Heart right ventricle (tissue), 16 donors: ENCODE measurements at regions of chr3 and their contacts with region 1.

Region 1: DNA sequence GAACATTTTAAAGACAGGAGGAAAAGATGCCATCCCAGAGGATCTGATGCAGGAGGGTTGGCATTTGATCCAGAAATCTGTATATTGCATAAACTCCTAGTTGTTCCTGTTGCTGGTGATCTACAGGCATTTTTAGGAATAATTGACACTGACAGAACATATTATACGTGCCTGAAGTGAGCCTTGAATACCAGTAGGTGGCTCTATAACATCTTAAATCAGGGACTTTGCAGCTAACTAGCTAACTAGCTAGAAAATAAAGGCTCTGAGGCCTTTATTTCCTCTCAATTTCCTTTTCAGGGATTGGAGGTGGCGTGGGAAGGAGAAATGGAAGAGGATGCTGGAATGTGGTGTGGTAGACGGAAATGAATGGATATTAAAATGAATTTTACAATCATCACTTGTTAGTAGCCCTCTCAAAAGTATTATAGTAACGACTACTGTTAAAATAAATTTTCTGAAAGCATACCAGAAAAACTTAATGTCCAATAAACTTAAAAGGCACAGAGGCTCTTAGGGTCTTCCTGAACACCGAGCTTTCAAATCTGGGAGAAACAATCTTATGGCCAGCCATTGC is 73.9 kb upstream of the ZBED2 start:
- DNase-seq: no peak
- ATAC-seq: peak; percentile 53 to 90 (median 86)
- H3K4me3 ChIP-seq: no peak overlapping the region
- H3K27ac ChIP-seq: peak overlapping the region in 4 of 10 donors; percentile 3 to 20 (median 8)
- H3K4me1 ChIP-seq: peaks cover 0 to 30% (median 3%) of the 10 kb centered on the region in 9 donors
- H3K27me3 ChIP-seq: no peaks in the 10 kb centered on the region
- CTCF ChIP-seq: peak; percentile 51 to 87 (median 75)

Region 2: DNA sequence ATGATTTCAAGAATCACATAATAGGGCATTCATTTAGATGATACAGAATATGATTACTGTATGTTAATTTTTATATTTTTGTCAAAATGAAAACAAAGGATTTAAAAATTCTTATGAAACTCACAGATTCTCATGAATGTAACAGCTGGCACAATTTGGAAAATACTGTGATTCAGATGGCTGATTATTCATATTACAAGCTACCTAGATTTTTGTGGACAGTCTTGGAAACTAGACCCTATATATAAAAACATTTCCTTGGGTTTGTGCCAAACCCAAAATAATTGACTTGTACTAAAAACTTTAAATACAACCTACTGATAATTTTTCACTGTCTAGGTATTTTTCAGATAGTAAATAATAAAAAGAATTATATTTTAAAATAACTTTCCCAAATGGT is 100.1 kb before region 1 on chr3:
- intact Hi-C with region 1: no loop called
- DNase-seq: no peak
- ATAC-seq: no peak
- H3K4me3 ChIP-seq: no peak overlapping the region
- H3K27ac ChIP-seq: no peak overlapping the region
- H3K4me1 ChIP-seq: no peaks in the 10 kb centered on the region
- H3K27me3 ChIP-seq: peaks cover 0 to 9% (median 5%) of the 10 kb centered on the region in 7 donors
- CTCF ChIP-seq: no peak

Region 3: GRCh38 chr3:111717601-111718000 is 48.6 kb after region 1 on chr3:
- intact Hi-C with region 1: loop called in 6 of 10 experiments (anchors 1 to 5 kb)
- DNase-seq: peak; percentile 51 to 77
- ATAC-seq: peak; percentile 82 to 93 (median 90)
- H3K4me3 ChIP-seq: no peak overlapping the region
- H3K27ac ChIP-seq: peak overlapping the region in 6 of 10 donors; percentile 12 to 38 (median 23)
- H3K4me1 ChIP-seq: peaks cover 0 to 41% (median 19%) of the 10 kb centered on the region in 9 donors
- H3K27me3 ChIP-seq: no peaks in the 10 kb centered on the region
- CTCF ChIP-seq: peak; percentile 92 to 97 (median 94)